BJ (cell line): ENCODE measurements at regions of chr13 and their contacts with region 1.

Region 1: GRCh38 chr13:27353166-27353583 is 71.2 kb upstream of the GTF3A start:
- DNase-seq: no peak
- H3K4me3 ChIP-seq: no peak overlapping the region
- H3K27me3 ChIP-seq: no peaks in the 10 kb centered on the region
- CTCF ChIP-seq: no peak

Region 2: GRCh38 chr13:26946684-26947343 is 406.4 kb before region 1 on chr13:
- CTCF ChIA-PET with region 1: interaction called, 136 read pairs
- POLR2A ChIA-PET with region 1: no interaction called
- DNase-seq: no peak
- H3K4me3 ChIP-seq: no peak overlapping the region
- H3K27me3 ChIP-seq: 0 out of 2 replicates have a peak, but pooled peaks cover 1% of the 10 kb centered on the region
- CTCF ChIP-seq: peak; percentile 80